ENCODE measurements at regions of chr20 and their contacts with region 1.

Region 1: DNA sequence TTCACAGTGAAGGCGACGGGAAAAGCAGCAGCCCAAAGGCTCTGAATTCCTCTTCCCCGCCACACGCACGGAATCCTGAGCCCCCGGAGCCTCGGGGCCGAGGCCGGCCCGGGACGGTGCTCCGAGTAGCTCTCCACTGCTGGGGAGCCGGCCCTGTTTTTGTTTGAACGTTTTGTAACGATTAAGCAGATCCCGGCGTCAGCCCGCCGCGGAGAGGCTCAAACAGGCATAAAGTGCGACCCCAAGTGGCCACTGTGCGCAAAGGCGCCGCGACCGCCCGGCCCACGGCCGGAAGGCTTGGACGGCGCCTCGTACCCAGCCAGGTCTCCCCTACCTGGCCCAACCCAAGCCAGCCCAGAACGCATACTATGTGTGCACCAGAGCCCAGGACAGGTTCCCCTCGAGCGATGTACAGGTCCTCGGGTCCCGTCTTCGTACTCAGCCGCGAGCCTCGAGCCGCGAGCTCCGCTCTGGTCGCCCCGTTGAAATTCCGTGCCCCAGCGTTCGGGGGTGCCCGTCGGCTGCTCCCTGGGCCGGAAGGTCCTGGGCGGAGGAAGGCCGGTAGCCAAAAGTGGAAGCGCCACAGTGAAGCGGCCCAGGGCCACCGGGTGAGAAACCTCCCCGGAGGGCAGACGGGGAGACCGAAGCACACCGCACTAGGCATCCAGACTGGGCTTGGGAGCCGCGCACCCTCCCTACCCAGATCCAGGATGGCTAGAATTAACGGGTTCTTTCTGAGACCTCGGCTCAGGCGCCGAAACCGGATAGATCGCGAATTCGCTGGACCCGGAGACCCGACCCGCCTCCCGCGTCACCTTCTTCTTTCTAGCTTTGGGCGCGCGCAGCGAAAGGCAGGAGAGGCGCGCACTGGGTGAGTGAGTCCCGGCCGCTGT is 1.2 kb upstream of the MAFB start:
- DNase-seq: peak; percentile 63 to 93 (median 89)
- H3K4me3 ChIP-seq: peak overlapping the region; percentile 50 to 82 (median 68)
- H3K27ac ChIP-seq: peak overlapping the region; percentile 84 to 99 (median 96)
- H3K27me3 ChIP-seq: peaks cover 0 to 73% (median 45%) of the 10 kb centered on the region in 45 donors
- CTCF ChIP-seq: peak; percentile 79 to 98 (median 93)

Region 2: GRCh38 chr20:40160097-40160550 is 530.1 kb before region 1 on chr20:
- intact Hi-C with region 1: loop called (anchors 5 kb)
- DNase-seq: peak in 4 of 10 donors; percentile 13 to 49 (median 41)
- H3K4me3 ChIP-seq: no peak overlapping the region
- H3K27ac ChIP-seq: no peak overlapping the region
- H3K27me3 ChIP-seq: peaks cover 0 to 3% (median 0%) of the 10 kb centered on the region in 45 donors
- CTCF ChIP-seq: peak; percentile 24 to 81 (median 64)

Region 3: DNA sequence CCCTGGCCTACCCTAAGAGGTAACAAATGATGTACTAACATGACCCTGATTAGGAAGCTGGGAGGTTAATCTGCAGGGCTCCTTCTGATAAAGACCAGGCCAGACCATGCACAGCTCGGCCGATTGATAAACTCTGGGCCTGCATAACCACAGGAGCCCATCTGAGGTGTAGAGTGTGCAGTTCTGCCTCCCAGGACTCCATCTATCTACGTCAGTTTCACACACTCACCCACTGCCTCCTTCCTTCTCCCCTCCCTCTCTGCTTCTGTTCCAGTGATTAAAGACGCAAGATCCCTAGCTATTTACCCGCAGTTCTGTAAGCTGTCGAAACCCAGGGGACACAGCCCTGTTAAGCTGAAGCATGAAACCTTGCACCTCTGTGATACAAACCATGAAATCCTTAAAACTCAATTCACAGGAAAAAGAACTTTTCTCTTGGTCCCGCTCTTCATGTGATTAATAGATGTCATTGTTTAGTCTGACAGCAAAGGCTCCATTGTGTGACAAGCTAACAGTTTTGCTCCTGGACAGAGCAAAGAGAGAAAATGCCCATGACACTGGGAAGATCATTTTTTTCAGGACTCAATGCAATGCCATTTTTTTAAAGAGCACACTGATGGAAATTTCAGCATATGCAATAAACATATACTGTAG is 471.7 kb before region 1 on chr20:
- intact Hi-C with region 1: loop called in 1 of 2 experiments (anchors 2 kb)
- DNase-seq: peak in 1 of 10 donors; percentile 28
- H3K4me3 ChIP-seq: peak overlapping the region in 6 of 59 donors; percentile 12 to 37 (median 20)
- H3K27ac ChIP-seq: peak overlapping the region in 53 of 59 donors; percentile 6 to 89 (median 66)
- H3K27me3 ChIP-seq: no peaks in the 10 kb centered on the region
- CTCF ChIP-seq: peak in 2 of 56 donors; percentile 26 to 29

Region 4: DNA sequence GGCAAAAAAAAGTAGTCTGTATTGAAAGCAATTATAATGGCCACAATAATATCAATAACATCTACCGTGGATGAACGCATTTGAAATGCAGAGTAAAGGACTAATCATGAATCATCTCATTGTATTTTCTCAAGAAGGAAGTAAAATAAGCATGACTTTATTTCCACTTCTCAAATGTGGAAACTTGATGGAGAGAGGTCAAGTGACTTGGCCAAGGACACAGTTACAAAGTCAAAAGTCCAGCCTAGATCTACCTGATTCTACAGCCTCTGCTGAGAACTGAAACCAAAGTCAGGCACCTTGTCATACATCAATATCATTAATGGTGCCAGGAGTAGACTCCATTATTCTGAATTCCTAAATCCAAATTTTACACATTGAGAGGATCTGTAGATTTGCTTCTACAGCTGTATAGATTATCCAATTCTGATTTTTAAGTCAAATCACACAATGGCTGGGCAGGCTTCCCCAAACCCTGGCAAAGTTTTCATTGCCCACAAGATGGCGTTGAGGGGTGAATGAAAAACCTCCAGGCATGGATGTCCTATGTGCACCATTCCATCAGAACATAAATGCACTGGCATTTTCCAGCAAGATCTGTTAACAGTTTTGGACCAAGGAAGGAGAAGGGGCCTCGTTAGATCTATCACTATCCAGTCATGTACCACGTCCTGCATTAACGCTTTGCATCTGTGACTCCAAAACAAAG is 424.2 kb before region 1 on chr20:
- intact Hi-C with region 1: loop called (anchors 1 to 10 kb)
- DNase-seq: peak in 2 of 10 donors; percentile 21 to 35
- H3K4me3 ChIP-seq: no peak overlapping the region
- H3K27ac ChIP-seq: no peak overlapping the region
- H3K27me3 ChIP-seq: no peaks in the 10 kb centered on the region
- CTCF ChIP-seq: peak in 52 of 56 donors; percentile 24 to 70 (median 48)

Region 5: GRCh38 chr20:40638402-40638801 is 51.8 kb before region 1 on chr20:
- intact Hi-C with region 1: no loop called
- DNase-seq: no peak
- H3K4me3 ChIP-seq: no peak overlapping the region
- H3K27ac ChIP-seq: no peak overlapping the region
- H3K27me3 ChIP-seq: peaks cover 0 to 9% (median 0%) of the 10 kb centered on the region in 45 donors
- CTCF ChIP-seq: no peak

Region 6: GRCh38 chr20:40945754-40946450 is 255.7 kb after region 1 on chr20:
- intact Hi-C with region 1: loop called in 1 of 2 experiments (anchors 5 kb)
- DNase-seq: peak; percentile 28 to 78 (median 71)
- H3K4me3 ChIP-seq: no peak overlapping the region
- H3K27ac ChIP-seq: no peak overlapping the region
- H3K27me3 ChIP-seq: peaks cover 0 to 21% (median 4%) of the 10 kb centered on the region in 45 donors
- CTCF ChIP-seq: peak in 54 of 56 donors; percentile 45 to 79 (median 64)